Head of caudate nucleus (tissue), 42 donors: ENCODE measurements at regions of chr7 and their contacts with region 1.

Region 1: GRCh38 chr7:3722396-3722922 is 421.4 kb downstream of the SDK1 start:
- DNase-seq: peak in 41 of 42 donors; percentile 9 to 77 (median 49)

Region 2: GRCh38 chr7:3094701-3095445 is 627.6 kb before region 1 on chr7:
- intact Hi-C with region 1: no loop called
- DNase-seq: peak in 16 of 42 donors; percentile 7 to 49 (median 29)

Region 3: DNA sequence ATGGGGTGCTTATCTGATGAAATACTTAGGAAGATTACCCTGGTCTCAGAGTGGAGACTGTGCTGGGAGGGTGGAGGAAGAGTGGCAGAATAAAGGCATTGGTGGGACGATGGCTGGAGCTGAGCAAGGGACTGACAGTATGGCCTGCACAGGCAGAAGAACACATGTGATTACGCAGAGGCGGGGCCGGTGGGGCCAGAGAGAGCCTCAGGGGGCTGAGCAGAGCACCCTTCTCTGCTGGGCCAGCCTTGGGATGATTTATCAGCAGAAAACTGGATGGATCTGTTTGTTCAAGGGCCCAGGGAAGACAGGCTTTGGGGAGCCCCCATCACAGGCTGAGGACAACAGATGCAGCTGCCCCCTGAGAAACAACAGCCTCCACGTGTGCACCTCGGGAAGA is 149.3 kb before region 1 on chr7:
- intact Hi-C with region 1: no loop called
- DNase-seq: no peak

Region 4: DNA sequence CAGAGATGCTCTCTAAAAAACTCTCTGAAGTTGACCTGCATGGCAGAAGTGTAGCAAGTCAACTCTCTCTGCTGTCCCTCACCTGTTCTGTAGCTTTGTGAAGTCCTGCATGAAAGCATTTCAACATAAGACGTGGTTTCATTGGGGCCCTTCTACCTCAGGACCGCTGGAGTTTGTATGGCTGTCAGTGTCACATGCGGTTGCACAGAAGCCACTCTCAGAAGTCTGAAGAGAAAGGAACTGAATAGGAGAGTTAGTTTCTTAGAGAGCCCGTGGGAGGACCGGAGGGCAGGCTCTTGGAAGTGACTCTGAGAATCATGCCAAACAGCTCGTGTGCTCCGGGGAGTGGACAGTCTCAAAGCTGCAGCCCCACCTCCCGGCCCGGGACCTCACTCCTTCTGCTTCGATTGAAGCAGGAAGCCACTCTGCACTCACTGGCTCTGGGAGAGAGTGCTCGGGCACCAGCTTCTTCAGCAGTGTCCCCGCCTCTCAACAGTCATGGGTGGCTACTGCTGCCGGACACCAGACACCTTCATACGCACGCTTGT is 65.3 kb after region 1 on chr7:
- intact Hi-C with region 1: no loop called
- DNase-seq: peak in 17 of 42 donors; percentile 4 to 42 (median 16)

Region 5: GRCh38 chr7:3897438-3898385 is 175.3 kb after region 1 on chr7:
- intact Hi-C with region 1: loop called (anchors 10 kb)
- DNase-seq: peak in 31 of 42 donors; percentile 27 to 81 (median 50)